ENCODE measurements at regions of chr3 and their contacts with region 1.

Region 1: GRCh38 chr3:114383875-114384557 is 90.2 kb downstream of the TIGIT start:
- DNase-seq: peak; percentile 40
- ATAC-seq: peak; percentile 98
- H3K4me3 Mint-ChIP-seq: no peak overlapping the region
- H3K27ac Mint-ChIP-seq: no peak overlapping the region
- H3K4me1 Mint-ChIP-seq: peaks cover 4% of the 10 kb centered on the region
- H3K27me3 Mint-ChIP-seq: no peaks in the 10 kb centered on the region
- CTCF ChIP-seq: peak; percentile 68

Region 2: GRCh38 chr3:114400371-114400770 is 16.4 kb after region 1 on chr3:
- CTCF ChIA-PET with region 1: interaction called, 5 read pairs
- POLR2A ChIA-PET with region 1: no interaction called
- intact Hi-C with region 1: loop called (anchors 2 kb)
- DNase-seq: no peak
- ATAC-seq: no peak
- H3K4me3 Mint-ChIP-seq: no peak overlapping the region
- H3K27ac Mint-ChIP-seq: no peak overlapping the region
- H3K4me1 Mint-ChIP-seq: peaks cover 9% of the 10 kb centered on the region
- H3K27me3 Mint-ChIP-seq: no peaks in the 10 kb centered on the region
- CTCF ChIP-seq: no peak

Region 3: GRCh38 chr3:114447545-114447944 is 63.5 kb after region 1 on chr3:
- CTCF ChIA-PET with region 1: interaction called, 15 read pairs
- POLR2A ChIA-PET with region 1: interaction called, 4 read pairs
- intact Hi-C with region 1: loop called (anchors 1 kb)
- DNase-seq: no peak
- ATAC-seq: no peak
- H3K4me3 Mint-ChIP-seq: peak overlapping the region; percentile 41
- H3K27ac Mint-ChIP-seq: peak overlapping the region; percentile 71
- H3K4me1 Mint-ChIP-seq: peaks cover 69% of the 10 kb centered on the region
- H3K27me3 Mint-ChIP-seq: no peaks in the 10 kb centered on the region
- CTCF ChIP-seq: no peak

Region 4: GRCh38 chr3:114827495-114827894 is 443.5 kb after region 1 on chr3:
- CTCF ChIA-PET with region 1: no interaction called
- POLR2A ChIA-PET with region 1: no interaction called
- intact Hi-C with region 1: loop called (anchors 1 kb)
- DNase-seq: no peak
- ATAC-seq: peak; percentile 75
- H3K4me3 Mint-ChIP-seq: no peak overlapping the region
- H3K27ac Mint-ChIP-seq: no peak overlapping the region
- H3K4me1 Mint-ChIP-seq: no peaks in the 10 kb centered on the region
- H3K27me3 Mint-ChIP-seq: no peaks in the 10 kb centered on the region
- CTCF ChIP-seq: no peak

Region 5: GRCh38 chr3:115092220-115092791 is 708.3 kb after region 1 on chr3:
- CTCF ChIA-PET with region 1: no interaction called
- POLR2A ChIA-PET with region 1: no interaction called
- intact Hi-C with region 1: loop called (anchors 5 kb)
- DNase-seq: no peak
- ATAC-seq: peak; percentile 45
- H3K4me3 Mint-ChIP-seq: no peak overlapping the region
- H3K27ac Mint-ChIP-seq: no peak overlapping the region
- H3K4me1 Mint-ChIP-seq: peaks cover 5% of the 10 kb centered on the region
- H3K27me3 Mint-ChIP-seq: no peaks in the 10 kb centered on the region
- CTCF ChIP-seq: no peak

Region 6: DNA sequence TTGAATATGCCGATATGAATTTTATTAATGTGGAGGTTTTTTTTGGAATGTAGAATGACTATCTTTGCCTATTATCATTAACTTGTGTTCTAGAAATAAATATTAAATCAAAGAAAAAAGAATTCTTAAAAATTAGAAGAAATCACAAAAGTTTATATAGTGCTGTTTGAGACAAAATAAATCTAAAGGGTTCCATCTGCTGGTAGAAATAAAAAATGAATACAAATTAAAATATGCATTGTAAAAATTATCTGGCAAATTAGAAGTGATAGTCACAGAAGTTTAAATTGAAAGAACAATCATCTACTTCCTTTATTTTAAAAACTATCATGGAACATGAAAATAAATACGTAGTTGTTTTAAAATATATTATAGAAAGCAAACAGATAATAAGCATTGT is 785.8 kb after region 1 on chr3:
- CTCF ChIA-PET with region 1: no interaction called
- POLR2A ChIA-PET with region 1: interaction called, 4 read pairs
- intact Hi-C with region 1: loop called (anchors 5 kb)
- DNase-seq: no peak
- ATAC-seq: no peak
- H3K4me3 Mint-ChIP-seq: no peak overlapping the region
- H3K27ac Mint-ChIP-seq: no peak overlapping the region
- H3K4me1 Mint-ChIP-seq: peaks cover 7% of the 10 kb centered on the region
- H3K27me3 Mint-ChIP-seq: no peaks in the 10 kb centered on the region
- CTCF ChIP-seq: no peak

Region 7: GRCh38 chr3:115819785-115820384 is 1435.9 kb after region 1 on chr3:
- CTCF ChIA-PET with region 1: no interaction called
- POLR2A ChIA-PET with region 1: no interaction called
- intact Hi-C with region 1: loop called (anchors 10 kb)
- DNase-seq: no peak
- ATAC-seq: peak; percentile 90
- H3K4me3 Mint-ChIP-seq: no peak overlapping the region
- H3K27ac Mint-ChIP-seq: no peak overlapping the region
- H3K4me1 Mint-ChIP-seq: no peaks in the 10 kb centered on the region
- H3K27me3 Mint-ChIP-seq: no peaks in the 10 kb centered on the region
- CTCF ChIP-seq: peak; percentile 61